Heart left ventricle (tissue), 16 donors: ENCODE measurements at regions of chr6 and their contacts with region 1.

Region 1: GRCh38 chr6:2634139-2634964 is 116.4 kb downstream of the MYLK4 start:
- DNase-seq: peak; percentile 86 to 94 (median 89)
- ATAC-seq: peak; percentile 85 to 94 (median 91)
- H3K4me3 ChIP-seq: peak overlapping the region in 11 of 12 donors; percentile 32 to 70 (median 57)
- H3K27ac ChIP-seq: peak overlapping the region; percentile 20 to 86 (median 69)
- H3K4me1 ChIP-seq: peaks cover 0 to 34% (median 15%) of the 10 kb centered on the region in 12 donors
- H3K27me3 ChIP-seq: no peaks in the 10 kb centered on the region
- CTCF ChIP-seq: peak; percentile 97 to 100 (median 99)
- POLR2A ChIP-seq: no peak

Region 2: GRCh38 chr6:1596088-1596852 is 1038.1 kb before region 1 on chr6:
- intact Hi-C with region 1: loop called (anchors 2 to 5 kb)
- DNase-seq: peak in 4 of 5 donors; percentile 38 to 72 (median 52)
- ATAC-seq: peak; percentile 69 to 90 (median 82)
- H3K4me3 ChIP-seq: peak overlapping the region in 10 of 12 donors; percentile 1 to 44 (median 26)
- H3K27ac ChIP-seq: no peak overlapping the region
- H3K4me1 ChIP-seq: peaks cover 0 to 11% (median 6%) of the 10 kb centered on the region in 12 donors
- H3K27me3 ChIP-seq: peaks cover 8 to 47% (median 21%) of the 10 kb centered on the region in 9 donors
- CTCF ChIP-seq: peak; percentile 88 to 97 (median 94)
- POLR2A ChIP-seq: no peak

Region 3: GRCh38 chr6:2103644-2104523 is 530.5 kb before region 1 on chr6:
- intact Hi-C with region 1: loop called in 2 of 10 experiments (anchors 10 kb)
- DNase-seq: no peak
- ATAC-seq: peak; percentile 61 to 81 (median 76)
- H3K4me3 ChIP-seq: peak overlapping the region in 6 of 12 donors; percentile 2 to 38 (median 15)
- H3K27ac ChIP-seq: peak overlapping the region in 1 of 12 donors; percentile 12
- H3K4me1 ChIP-seq: peaks cover 0 to 12% (median 1%) of the 10 kb centered on the region in 12 donors
- H3K27me3 ChIP-seq: no peaks in the 10 kb centered on the region
- CTCF ChIP-seq: peak; percentile 35 to 73 (median 60)
- POLR2A ChIP-seq: no peak

Region 4: GRCh38 chr6:2190661-2191389 is 443.5 kb before region 1 on chr6:
- intact Hi-C with region 1: loop called in 2 of 10 experiments (anchors 5 to 10 kb)
- DNase-seq: peak in 1 of 5 donors; percentile 57
- ATAC-seq: peak in 1 of 4 donors; percentile 44
- H3K4me3 ChIP-seq: no peak overlapping the region
- H3K27ac ChIP-seq: no peak overlapping the region
- H3K4me1 ChIP-seq: peaks cover 0 to 3% (median 0%) of the 10 kb centered on the region in 12 donors
- H3K27me3 ChIP-seq: no peaks in the 10 kb centered on the region
- CTCF ChIP-seq: no peak
- POLR2A ChIP-seq: no peak

Region 5: DNA sequence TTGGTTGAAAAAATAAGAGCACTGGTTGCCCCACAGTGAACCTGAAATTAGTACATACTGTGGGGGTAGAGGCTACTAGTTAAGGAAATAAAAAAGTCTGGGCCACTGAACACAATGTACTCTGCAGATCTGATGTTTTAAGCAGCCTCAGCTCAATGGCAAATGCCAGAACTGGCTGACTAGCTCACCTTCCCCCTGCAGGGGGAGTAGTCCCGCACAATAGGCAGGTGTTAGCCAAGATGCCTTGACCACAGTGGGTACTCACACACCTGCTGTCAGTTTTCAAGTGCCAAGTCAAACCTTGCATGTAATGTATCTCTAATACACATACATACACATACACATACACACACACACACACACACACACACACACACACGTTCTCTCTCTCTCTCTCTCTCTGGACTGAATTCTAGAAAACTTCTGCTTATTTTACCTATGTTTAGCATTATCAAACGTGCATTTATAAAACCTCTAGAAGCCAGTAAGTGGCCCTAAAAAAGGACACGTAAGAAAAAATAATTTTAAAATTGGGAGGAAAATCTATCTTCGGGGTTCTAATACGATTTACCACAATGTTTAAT is 425.0 kb before region 1 on chr6:
- intact Hi-C with region 1: loop called in 2 of 10 experiments (anchors 10 kb)
- DNase-seq: no peak
- ATAC-seq: peak; percentile 55 to 75 (median 69)
- H3K4me3 ChIP-seq: no peak overlapping the region
- H3K27ac ChIP-seq: no peak overlapping the region
- H3K4me1 ChIP-seq: no peaks in the 10 kb centered on the region
- H3K27me3 ChIP-seq: no peaks in the 10 kb centered on the region
- CTCF ChIP-seq: peak in 11 of 12 donors; percentile 12 to 50 (median 41)
- POLR2A ChIP-seq: no peak

Region 6: DNA sequence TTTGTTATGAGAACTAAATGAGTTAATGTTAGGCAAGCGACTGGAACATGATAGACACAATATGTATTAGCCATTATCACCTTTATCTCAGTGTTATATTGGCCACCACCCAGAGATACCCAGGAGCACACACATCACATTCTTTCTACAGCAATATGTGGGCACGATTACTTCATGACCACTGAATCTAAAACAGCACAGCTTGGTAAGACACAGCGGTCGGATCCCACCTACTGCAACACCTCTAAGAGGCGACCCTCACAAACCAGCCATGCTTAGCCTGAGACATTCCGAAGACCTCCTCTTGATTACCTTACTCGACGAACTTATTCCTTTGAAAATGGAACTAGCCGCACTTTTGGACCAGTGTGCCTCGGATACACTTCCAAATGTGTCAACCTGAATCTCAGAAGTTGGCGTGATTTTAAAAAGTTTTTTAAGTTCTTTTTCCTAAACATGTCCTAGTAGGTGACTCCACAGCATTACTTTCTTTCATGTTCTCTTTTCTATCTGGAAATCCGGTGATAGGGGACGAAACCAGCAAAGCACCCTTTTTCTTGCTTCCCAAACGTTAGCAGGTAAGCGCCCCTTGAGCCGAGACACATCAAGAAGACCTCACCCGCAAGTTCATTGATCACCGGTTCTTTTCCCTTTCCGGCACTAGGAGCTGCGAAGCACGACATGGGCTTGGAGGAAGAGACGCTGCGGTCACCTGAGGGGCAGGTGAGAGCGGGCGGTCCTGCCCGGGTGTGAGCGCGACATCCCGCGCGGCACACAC is 389.8 kb before region 1 on chr6:
- intact Hi-C with region 1: loop called in 1 of 10 experiments (anchors 5 kb)
- DNase-seq: no peak
- ATAC-seq: no peak
- H3K4me3 ChIP-seq: peak overlapping the region; percentile 72 to 99 (median 92)
- H3K27ac ChIP-seq: peak overlapping the region in 4 of 12 donors; percentile 70 to 92 (median 88)
- H3K4me1 ChIP-seq: peaks cover 0 to 31% (median 14%) of the 10 kb centered on the region in 12 donors
- H3K27me3 ChIP-seq: no peaks in the 10 kb centered on the region
- CTCF ChIP-seq: no peak
- POLR2A ChIP-seq: no peak

Region 7: GRCh38 chr6:2448820-2449571 is 185.4 kb before region 1 on chr6:
- intact Hi-C with region 1: loop called in 2 of 10 experiments (anchors 5 to 10 kb)
- DNase-seq: peak in 1 of 5 donors; percentile 30
- ATAC-seq: peak in 3 of 4 donors; percentile 69 to 73 (median 70)
- H3K4me3 ChIP-seq: peak overlapping the region in 1 of 12 donors; percentile 33
- H3K27ac ChIP-seq: no peak overlapping the region
- H3K4me1 ChIP-seq: peaks cover 0 to 12% (median 0%) of the 10 kb centered on the region in 12 donors
- H3K27me3 ChIP-seq: no peaks in the 10 kb centered on the region
- CTCF ChIP-seq: peak; percentile 29 to 72 (median 54)
- POLR2A ChIP-seq: no peak